T-cell (primary cell): ENCODE measurements at regions of chr3 and their contacts with region 1.

Region 1: DNA sequence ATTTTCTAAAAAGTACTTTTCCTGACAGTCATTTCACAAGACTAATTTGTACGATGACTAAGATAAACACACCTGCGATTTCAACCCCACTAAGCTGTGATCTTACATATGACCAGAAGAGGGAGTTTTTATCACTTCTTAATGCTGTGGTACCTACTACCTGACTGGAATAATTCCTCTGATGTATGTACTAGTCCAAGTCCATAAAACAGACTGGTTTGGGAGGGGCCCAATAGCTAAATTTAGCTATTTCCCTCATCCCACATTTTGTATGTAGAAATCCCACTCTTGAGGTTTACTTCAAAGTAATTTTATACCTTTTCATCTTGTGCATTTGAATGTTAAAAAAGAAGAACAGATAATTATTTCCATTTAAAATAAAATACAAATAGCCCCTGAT is 49.7 kb upstream of the SCAANT1 start:
- DNase-seq: peak in 2 of 35 experiments; percentile 23 to 77
- ATAC-seq: peak; percentile 91 to 97 (median 92)
- H3K4me3 ChIP-seq: no peak overlapping the region
- H3K4me3 Mint-ChIP-seq: no peak overlapping the region
- H3K27ac ChIP-seq: no peak overlapping the region
- H3K27ac Mint-ChIP-seq: no peak overlapping the region
- H3K4me1 ChIP-seq: peaks cover 10 to 17% of the 10 kb centered on the region in 2 experiments
- H3K4me1 Mint-ChIP-seq: peaks cover 30 to 58% (median 56%) of the 10 kb centered on the region in 3 donors
- H3K27me3 ChIP-seq: no peaks in the 10 kb centered on the region
- H3K27me3 Mint-ChIP-seq: no peaks in the 10 kb centered on the region

Region 2: GRCh38 chr3:63981980-63982379 is 20.1 kb after region 1 on chr3:
- CTCF ChIA-PET with region 1: interaction called, 54 to 220 read pairs
- POLR2A ChIA-PET with region 1: interaction called, 27 to 119 read pairs
- DNase-seq: no peak
- ATAC-seq: no peak
- H3K4me3 ChIP-seq: no peak overlapping the region
- H3K4me3 Mint-ChIP-seq: peak overlapping the region in 1 of 3 donors; percentile 25
- H3K27ac ChIP-seq: peak overlapping the region; percentile 69
- H3K27ac Mint-ChIP-seq: peak overlapping the region; percentile 88 to 96
- H3K4me1 ChIP-seq: peaks cover 40 to 50% of the 10 kb centered on the region in 2 experiments
- H3K4me1 Mint-ChIP-seq: peaks cover 83 to 89% (median 87%) of the 10 kb centered on the region in 3 donors
- H3K27me3 ChIP-seq: no peaks in the 10 kb centered on the region
- H3K27me3 Mint-ChIP-seq: no peaks in the 10 kb centered on the region

Region 3: GRCh38 chr3:63993653-63994079 is 31.8 kb after region 1 on chr3:
- CTCF ChIA-PET with region 1: interaction called, 56 to 80 read pairs
- POLR2A ChIA-PET with region 1: interaction called, 4 to 7 read pairs
- DNase-seq: peak; percentile 22 to 75 (median 49)
- ATAC-seq: peak; percentile 80 to 86 (median 82)
- H3K4me3 ChIP-seq: no peak overlapping the region
- H3K4me3 Mint-ChIP-seq: no peak overlapping the region
- H3K27ac ChIP-seq: no peak overlapping the region
- H3K27ac Mint-ChIP-seq: peak overlapping the region; percentile 70 to 74
- H3K4me1 ChIP-seq: peaks cover 0 to 19% of the 10 kb centered on the region in 2 experiments
- H3K4me1 Mint-ChIP-seq: peaks cover 47 to 61% (median 54%) of the 10 kb centered on the region in 3 donors
- H3K27me3 ChIP-seq: no peaks in the 10 kb centered on the region
- H3K27me3 Mint-ChIP-seq: no peaks in the 10 kb centered on the region

Region 4: GRCh38 chr3:64023187-64023848 is 61.4 kb after region 1 on chr3 and contains the start of gene PSMD6:
- CTCF ChIA-PET with region 1: interaction called, 3 to 12 read pairs
- POLR2A ChIA-PET with region 1: interaction called, 4 to 5 read pairs
- DNase-seq: peak; percentile 77 to 97 (median 88)
- ATAC-seq: peak; percentile 93 to 97 (median 96)
- H3K4me3 ChIP-seq: peak within 1 kb of the TSS; percentile 75 to 85
- H3K4me3 Mint-ChIP-seq: peak within 1 kb of the TSS; percentile 88
- H3K27ac ChIP-seq: peak within 1 kb of the TSS; percentile 69
- H3K27ac Mint-ChIP-seq: peak within 1 kb of the TSS; percentile 87 to 93
- H3K4me1 ChIP-seq: peaks cover 10 to 26% of the 10 kb centered on the region in 2 experiments
- H3K4me1 Mint-ChIP-seq: peaks cover 34 to 39% (median 38%) of the 10 kb centered on the region in 3 donors
- H3K27me3 ChIP-seq: no peaks in the 10 kb centered on the region
- H3K27me3 Mint-ChIP-seq: peaks cover 13 to 16% of the 10 kb centered on the region in 2 donors
- total RNA-seq, gene PSMD6: 60.2 to 95.4 (median 73.2) TPM

Region 5: GRCh38 chr3:64685800-64686445 is 724.0 kb after region 1 on chr3:
- CTCF ChIA-PET with region 1: no interaction called
- POLR2A ChIA-PET with region 1: no interaction called
- DNase-seq: no peak
- ATAC-seq: no peak
- H3K4me3 ChIP-seq: no peak overlapping the region
- H3K4me3 Mint-ChIP-seq: no peak overlapping the region
- H3K27ac ChIP-seq: no peak overlapping the region
- H3K27ac Mint-ChIP-seq: no peak overlapping the region
- H3K4me1 ChIP-seq: no peaks in the 10 kb centered on the region
- H3K4me1 Mint-ChIP-seq: peaks cover 10 to 15% (median 14%) of the 10 kb centered on the region in 3 donors
- H3K27me3 ChIP-seq: peaks cover 6 to 34% of the 10 kb centered on the region in 2 experiments
- H3K27me3 Mint-ChIP-seq: peaks cover 35 to 52% of the 10 kb centered on the region in 2 donors